ENCODE measurements at regions of chr6 and their contacts with region 1.

Region 1: GRCh38 chr6:138987640-138988468 is at the start of gene REPS1:
- DNase-seq: peak; percentile 94 to 97 (median 96)
- ATAC-seq: peak; percentile 98
- H3K4me3 ChIP-seq: peak within 1 kb of the TSS; percentile 86
- H3K27ac ChIP-seq: peak within 1 kb of the TSS; percentile 86
- H3K4me1 ChIP-seq: peaks cover 17 to 22% of the 10 kb centered on the region in 2 experiments
- H3K27me3 ChIP-seq: peaks cover 3 to 27% of the 10 kb centered on the region in 2 experiments; a peak in 3 of 5 replicates
- CTCF ChIP-seq: peak; percentile 89 to 95 (median 91)
- EP300 ChIP-seq: no peak; the same call in 1 of the 2 replicates
- POLR2A ChIP-seq: peak; percentile 92
- RAD21 ChIP-seq: peak; percentile 85 to 88
- polyA plus RNA-seq, gene REPS1: 7.9 to 11.4 TPM

Region 2: GRCh38 chr6:138817822-138818308 is 170.0 kb before region 1 on chr6:
- CTCF ChIA-PET with region 1: interaction called, 5 read pairs
- POLR2A ChIA-PET with region 1: no interaction called
- in situ Hi-C with region 1: loop called (anchors 5 kb)
- intact Hi-C with region 1: loop called (anchors 1 kb)
- DNase-seq: peak in 1 of 4 experiments; percentile 11
- ATAC-seq: no peak
- H3K4me3 ChIP-seq: no peak overlapping the region
- H3K27ac ChIP-seq: no peak overlapping the region
- H3K4me1 ChIP-seq: no peaks in the 10 kb centered on the region
- H3K27me3 ChIP-seq: peaks cover 33 to 37% of the 10 kb centered on the region in 2 experiments
- CTCF ChIP-seq: no peak
- EP300 ChIP-seq: no peak
- POLR2A ChIP-seq: no peak
- RAD21 ChIP-seq: no peak

Region 3: GRCh38 chr6:138923561-138923960 is 64.3 kb before region 1 on chr6:
- CTCF ChIA-PET with region 1: no interaction called
- POLR2A ChIA-PET with region 1: no interaction called
- in situ Hi-C with region 1: no loop called
- intact Hi-C with region 1: no loop called
- DNase-seq: no peak
- ATAC-seq: no peak
- H3K4me3 ChIP-seq: no peak overlapping the region
- H3K27ac ChIP-seq: no peak overlapping the region
- H3K4me1 ChIP-seq: no peaks in the 10 kb centered on the region
- H3K27me3 ChIP-seq: no peaks in the 10 kb centered on the region
- CTCF ChIP-seq: no peak
- EP300 ChIP-seq: no peak
- POLR2A ChIP-seq: no peak
- RAD21 ChIP-seq: no peak

Region 4: DNA sequence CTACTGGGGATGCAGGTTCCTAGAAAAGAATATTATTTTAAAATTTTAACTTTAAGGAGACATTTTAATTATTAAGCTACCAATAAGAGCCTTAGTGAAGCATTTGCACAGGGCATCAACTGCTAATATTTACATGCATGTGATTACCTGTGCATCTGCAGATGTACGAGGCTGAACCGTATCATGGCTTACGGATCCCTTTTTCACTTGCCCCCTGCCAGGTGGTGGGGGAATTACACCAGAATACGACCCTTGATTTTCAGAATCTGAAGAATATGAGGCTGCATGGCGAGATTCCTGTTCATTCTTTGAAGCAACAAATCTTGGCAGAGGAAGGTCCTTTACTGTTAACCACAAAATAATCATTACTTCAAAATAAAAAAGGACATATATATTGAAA is 42.5 kb before region 1 on chr6:
- CTCF ChIA-PET with region 1: no interaction called
- POLR2A ChIA-PET with region 1: interaction called, 3 read pairs
- in situ Hi-C with region 1: no loop called
- intact Hi-C with region 1: loop called (anchors 5 kb)
- DNase-seq: peak in 3 of 4 experiments; percentile 16 to 22 (median 18)
- ATAC-seq: peak; percentile 69
- H3K4me3 ChIP-seq: no peak overlapping the region
- H3K27ac ChIP-seq: no peak overlapping the region
- H3K4me1 ChIP-seq: no peaks in the 10 kb centered on the region; a peak in 2 of 5 replicates
- H3K27me3 ChIP-seq: no peaks in the 10 kb centered on the region
- CTCF ChIP-seq: peak; percentile 12 to 32 (median 20); a peak in 2 of 6 replicates
- EP300 ChIP-seq: no peak
- POLR2A ChIP-seq: no peak
- RAD21 ChIP-seq: no peak

Region 5: GRCh38 chr6:138970856-138971425 is 16.9 kb before region 1 on chr6:
- CTCF ChIA-PET with region 1: no interaction called
- POLR2A ChIA-PET with region 1: interaction called, 22 read pairs
- in situ Hi-C with region 1: no loop called
- intact Hi-C with region 1: no loop called
- DNase-seq: no peak
- ATAC-seq: no peak; the same call in 2 of the 3 replicates
- H3K4me3 ChIP-seq: no peak overlapping the region
- H3K27ac ChIP-seq: no peak overlapping the region
- H3K4me1 ChIP-seq: peaks cover 0 to 6% of the 10 kb centered on the region in 2 experiments; a peak in 1 of 5 replicates
- H3K27me3 ChIP-seq: no peaks in the 10 kb centered on the region
- CTCF ChIP-seq: no peak
- EP300 ChIP-seq: no peak
- POLR2A ChIP-seq: no peak
- RAD21 ChIP-seq: no peak